ENCODE measurements at regions of chr19 and their contacts with region 1.

Region 1: DNA sequence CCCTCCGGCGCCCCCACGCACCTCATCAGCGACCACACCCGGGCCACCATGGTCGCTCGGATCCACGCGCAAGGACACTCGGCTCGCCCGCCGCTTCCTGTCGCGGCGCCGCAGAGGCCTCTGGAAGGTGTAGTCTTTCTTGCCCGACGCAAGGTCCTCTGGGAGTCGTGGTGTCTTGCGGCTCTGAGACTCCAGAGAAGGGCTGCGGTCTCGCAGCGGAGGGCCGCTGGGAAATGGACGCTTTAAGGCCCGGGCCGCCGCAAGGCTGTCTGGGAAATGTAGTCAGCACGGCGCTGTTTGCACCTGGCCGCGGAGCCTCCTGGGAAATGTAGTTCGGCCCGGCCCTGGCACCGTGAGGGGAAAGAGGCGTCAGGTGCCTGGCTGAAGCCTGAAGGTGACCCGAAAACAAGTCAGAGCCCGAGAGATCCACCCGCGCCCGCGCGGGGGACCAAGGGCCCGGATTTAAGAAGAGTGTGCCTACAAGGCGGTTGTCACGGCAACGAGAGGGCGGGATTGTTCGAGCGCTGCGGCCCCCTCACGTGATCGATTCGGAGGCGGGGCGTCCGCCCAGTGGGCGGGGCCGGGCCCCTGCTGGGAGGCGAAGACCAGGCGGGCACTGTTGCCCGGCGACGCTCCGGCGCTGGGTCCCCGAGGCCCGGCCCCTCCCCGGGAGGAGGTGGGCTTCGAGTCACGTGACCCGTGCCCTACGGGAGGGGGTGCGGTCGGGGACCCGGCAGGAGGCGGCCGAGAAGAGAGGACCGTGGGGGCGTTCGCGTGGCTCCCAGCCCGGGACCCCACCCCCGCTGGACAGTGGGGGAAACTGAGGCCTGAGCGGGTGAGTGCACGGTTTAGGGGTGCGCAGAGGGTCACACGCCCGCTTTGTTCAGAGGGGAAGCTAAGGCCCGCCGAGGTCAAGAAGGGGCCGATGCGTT is at the starts of genes HSD11B1L and MICOS13:
- DNase-seq: peak; percentile 100
- total RNA-seq, gene HSD11B1L: 4.3 TPM
- total RNA-seq, gene MICOS13: 143 TPM

Region 2: GRCh38 chr19:5622463-5623396 is 58.0 kb before region 1 on chr19 and contains the starts of genes SAFB and SAFB2:
- intact Hi-C with region 1: loop called (anchors 1 kb)
- DNase-seq: peak; percentile 100
- total RNA-seq, gene SAFB: 67.4 TPM
- total RNA-seq, gene SAFB2: 48.6 TPM

Region 3: DNA sequence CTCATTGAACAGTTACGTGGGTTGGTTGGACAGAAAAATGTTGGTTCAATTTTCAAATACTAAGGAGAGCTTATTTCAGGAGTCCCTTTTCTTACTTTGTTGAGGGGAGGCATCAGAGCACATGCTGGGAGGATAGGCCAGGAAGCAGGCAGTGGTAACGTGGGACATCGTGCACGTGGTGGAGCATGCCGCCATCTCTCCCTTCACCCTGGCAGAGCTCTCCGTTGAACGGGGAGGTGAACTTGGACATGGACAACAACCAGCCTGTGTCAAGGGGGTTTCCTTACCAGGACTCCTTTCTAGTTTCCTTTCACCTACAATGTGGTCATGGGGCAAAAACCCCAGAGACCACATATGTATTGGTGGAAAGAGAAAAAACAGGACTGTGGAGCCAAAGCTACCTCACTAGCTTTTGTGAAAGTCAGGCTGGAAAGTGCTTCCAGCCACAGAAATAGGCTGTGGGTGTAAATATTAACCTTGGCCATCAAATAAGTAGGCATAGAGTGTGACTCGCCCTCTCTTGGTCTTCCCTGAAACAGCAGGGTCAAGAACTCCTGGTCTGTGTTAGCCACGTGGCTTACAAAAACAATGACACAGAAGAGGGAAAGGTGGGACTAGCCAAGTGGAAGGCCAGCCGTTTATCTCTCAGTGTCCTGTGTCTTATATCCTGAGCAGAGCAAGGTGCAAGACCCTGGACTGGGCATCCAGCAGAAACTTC is 14.7 kb before region 1 on chr19:
- intact Hi-C with region 1: no loop called
- DNase-seq: no peak

Region 4: DNA sequence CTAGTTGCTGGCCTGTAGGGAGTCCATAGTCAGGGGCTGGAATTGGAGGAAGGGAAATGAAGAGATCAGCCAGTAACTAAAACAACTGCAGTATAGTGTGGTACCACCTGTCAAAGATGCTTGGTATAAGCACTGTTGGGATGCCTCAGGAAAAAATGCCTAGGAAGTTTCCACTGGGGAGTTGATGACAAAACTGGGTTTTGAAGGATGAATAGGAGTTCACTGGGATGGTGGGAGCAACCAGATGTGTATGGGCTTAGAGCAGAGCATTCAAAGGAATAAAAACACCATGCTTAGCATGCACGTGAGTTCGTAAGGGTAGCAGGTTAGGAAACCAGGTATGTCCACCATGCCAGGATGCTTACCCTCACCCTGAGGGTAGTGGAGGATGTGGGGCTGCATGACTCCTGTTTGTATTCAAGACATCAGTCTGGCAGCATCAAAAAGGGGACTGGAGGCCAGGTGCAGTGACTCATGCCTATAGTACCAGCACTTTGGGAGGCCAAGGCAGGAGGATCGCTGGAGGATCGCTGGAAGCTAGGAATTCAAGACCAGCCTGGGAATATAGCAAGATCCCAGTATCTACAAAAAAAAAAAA is 46.8 kb after region 1 on chr19:
- intact Hi-C with region 1: no loop called
- DNase-seq: no peak

Region 5: GRCh38 chr19:5790573-5791520 is 110.1 kb after region 1 on chr19 and contains the start of gene DUS3L:
- intact Hi-C with region 1: loop called (anchors 5 kb)
- DNase-seq: peak; percentile 98
- total RNA-seq, gene DUS3L: 21.6 TPM